Naive thymus-derived CD4-positive, alpha-beta T cell (primary cell): ENCODE measurements at regions of chr11 and their contacts with region 1.

Region 1: DNA sequence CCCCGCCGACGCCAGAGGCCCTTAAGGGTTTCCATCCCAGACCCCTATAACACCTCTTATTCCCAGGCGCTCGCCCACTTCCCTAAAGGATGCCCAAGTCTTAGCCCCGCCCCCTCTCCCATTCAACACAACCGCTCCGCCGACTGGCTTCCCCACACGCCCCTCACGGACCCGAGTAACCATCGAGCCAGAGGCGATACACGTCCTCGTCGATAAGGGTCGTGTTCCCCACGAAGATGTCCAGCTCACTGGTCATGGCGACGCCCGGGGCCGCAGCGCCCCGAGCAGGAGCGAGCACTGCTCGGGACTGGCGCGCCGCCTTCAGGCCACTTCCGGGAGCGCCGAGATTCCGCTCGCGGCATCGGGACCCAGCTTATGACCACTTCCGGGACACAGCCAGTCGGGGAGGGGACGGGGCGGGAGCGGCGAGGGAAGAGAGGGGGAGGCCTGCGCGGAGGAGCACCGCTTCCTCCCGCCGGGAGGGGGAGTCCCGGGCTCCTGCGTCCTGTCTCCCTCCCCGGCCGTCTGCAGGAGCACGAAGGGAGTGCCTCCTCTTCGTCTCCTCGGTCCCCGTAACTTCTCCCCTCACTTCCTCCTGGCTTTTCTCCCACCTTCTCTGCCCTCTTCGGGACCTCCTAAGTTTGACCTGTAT is at the start of gene FIBP:
- DNase-seq: peak; percentile 84 to 95 (median 90)
- ATAC-seq: peak; percentile 74
- H3K4me3 ChIP-seq: peak within 1 kb of the TSS; percentile 84
- H3K4me3 Mint-ChIP-seq: peak within 1 kb of the TSS; percentile 88 to 97 (median 93)
- H3K27ac ChIP-seq: peak within 1 kb of the TSS; percentile 92
- H3K27ac Mint-ChIP-seq: peak within 1 kb of the TSS; percentile 93 to 99 (median 97)
- H3K4me1 ChIP-seq: peaks cover 37 to 45% of the 10 kb centered on the region in 2 donors
- H3K4me1 Mint-ChIP-seq: peaks cover 50 to 69% (median 53%) of the 10 kb centered on the region in 7 donors
- H3K27me3 ChIP-seq: no peaks in the 10 kb centered on the region
- H3K27me3 Mint-ChIP-seq: no peaks in the 10 kb centered on the region
- total RNA-seq, gene FIBP: 25.9 to 72.1 (median 43.4) TPM

Region 2: DNA sequence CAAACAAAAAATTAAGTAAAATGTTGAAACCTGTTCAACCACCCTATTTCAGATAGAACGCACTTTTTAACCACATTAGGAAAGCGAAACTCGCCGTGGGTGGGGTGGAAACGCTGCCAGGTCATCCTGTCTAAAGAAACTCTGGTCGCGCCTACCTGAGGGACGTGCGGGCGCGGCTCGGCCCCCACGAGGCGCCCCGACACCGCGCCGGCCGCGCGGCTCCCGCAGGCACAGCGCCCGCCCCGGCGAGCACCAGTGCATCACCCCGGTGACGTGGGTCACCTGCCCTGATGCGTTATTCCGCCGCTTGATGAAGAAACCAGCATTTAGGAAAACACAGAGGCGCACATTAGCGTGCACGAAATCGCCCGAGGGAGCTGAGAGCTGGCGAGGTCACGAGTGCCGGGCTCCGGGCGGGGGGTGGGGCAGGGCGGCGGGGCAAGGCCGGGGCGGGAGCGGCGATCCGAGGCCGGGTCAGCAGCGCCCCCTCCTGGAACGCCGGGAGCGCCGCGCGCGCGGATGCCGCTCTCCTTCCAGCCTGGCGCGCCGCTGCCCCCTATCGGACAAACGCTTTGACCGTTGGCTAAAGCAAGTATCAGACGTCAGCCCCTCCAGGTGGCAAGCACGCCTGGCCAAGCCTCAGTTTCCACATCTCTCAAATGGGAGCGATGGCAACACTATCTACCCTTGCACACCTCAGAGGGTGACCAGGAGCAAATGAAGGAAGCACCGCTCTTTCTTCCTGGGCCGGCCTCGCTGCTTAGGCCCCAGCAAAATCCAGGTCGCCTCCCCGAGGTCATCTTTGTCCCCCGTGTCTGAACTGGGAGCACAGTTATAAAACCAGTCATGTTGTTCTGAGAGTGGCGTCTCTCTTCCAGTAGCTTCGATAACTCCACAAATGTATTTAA is 70.2 kb before region 1 on chr11:
- CTCF ChIA-PET with region 1: interaction called, 14 read pairs
- POLR2A ChIA-PET with region 1: interaction called, 4 read pairs
- intact Hi-C with region 1: loop called in 1 of 2 experiments (anchors 1 kb)
- DNase-seq: peak; percentile 79 to 98 (median 89)
- ATAC-seq: peak; percentile 98
- H3K4me3 ChIP-seq: peak overlapping the region; percentile 72
- H3K4me3 Mint-ChIP-seq: peak overlapping the region; percentile 74 to 90 (median 82)
- H3K27ac ChIP-seq: peak overlapping the region; percentile 75
- H3K27ac Mint-ChIP-seq: peak overlapping the region; percentile 56 to 90 (median 76)
- H3K4me1 ChIP-seq: peaks cover 7% of the 10 kb centered on the region in 2 donors
- H3K4me1 Mint-ChIP-seq: peaks cover 6 to 21% (median 17%) of the 10 kb centered on the region in 7 donors
- H3K27me3 ChIP-seq: no peaks in the 10 kb centered on the region
- H3K27me3 Mint-ChIP-seq: peaks cover 0 to 4% (median 0%) of the 10 kb centered on the region in 5 donors

Region 3: GRCh38 chr11:65873318-65874156 is 14.8 kb before region 1 on chr11:
- CTCF ChIA-PET with region 1: interaction called, 38 read pairs
- POLR2A ChIA-PET with region 1: interaction called, 316 read pairs
- intact Hi-C with region 1: loop called (anchors 1 to 2 kb)
- DNase-seq: peak; percentile 93 to 100 (median 97)
- ATAC-seq: peak; percentile 99
- H3K4me3 ChIP-seq: peak overlapping the region; percentile 75
- H3K4me3 Mint-ChIP-seq: peak overlapping the region; percentile 84 to 97 (median 91)
- H3K27ac ChIP-seq: peak overlapping the region; percentile 88
- H3K27ac Mint-ChIP-seq: peak overlapping the region; percentile 71 to 92 (median 91)
- H3K4me1 ChIP-seq: peaks cover 10 to 22% of the 10 kb centered on the region in 2 donors
- H3K4me1 Mint-ChIP-seq: peaks cover 7 to 37% (median 18%) of the 10 kb centered on the region in 7 donors
- H3K27me3 ChIP-seq: no peaks in the 10 kb centered on the region
- H3K27me3 Mint-ChIP-seq: peaks cover 0 to 3% (median 0%) of the 10 kb centered on the region in 5 donors

Region 4: DNA sequence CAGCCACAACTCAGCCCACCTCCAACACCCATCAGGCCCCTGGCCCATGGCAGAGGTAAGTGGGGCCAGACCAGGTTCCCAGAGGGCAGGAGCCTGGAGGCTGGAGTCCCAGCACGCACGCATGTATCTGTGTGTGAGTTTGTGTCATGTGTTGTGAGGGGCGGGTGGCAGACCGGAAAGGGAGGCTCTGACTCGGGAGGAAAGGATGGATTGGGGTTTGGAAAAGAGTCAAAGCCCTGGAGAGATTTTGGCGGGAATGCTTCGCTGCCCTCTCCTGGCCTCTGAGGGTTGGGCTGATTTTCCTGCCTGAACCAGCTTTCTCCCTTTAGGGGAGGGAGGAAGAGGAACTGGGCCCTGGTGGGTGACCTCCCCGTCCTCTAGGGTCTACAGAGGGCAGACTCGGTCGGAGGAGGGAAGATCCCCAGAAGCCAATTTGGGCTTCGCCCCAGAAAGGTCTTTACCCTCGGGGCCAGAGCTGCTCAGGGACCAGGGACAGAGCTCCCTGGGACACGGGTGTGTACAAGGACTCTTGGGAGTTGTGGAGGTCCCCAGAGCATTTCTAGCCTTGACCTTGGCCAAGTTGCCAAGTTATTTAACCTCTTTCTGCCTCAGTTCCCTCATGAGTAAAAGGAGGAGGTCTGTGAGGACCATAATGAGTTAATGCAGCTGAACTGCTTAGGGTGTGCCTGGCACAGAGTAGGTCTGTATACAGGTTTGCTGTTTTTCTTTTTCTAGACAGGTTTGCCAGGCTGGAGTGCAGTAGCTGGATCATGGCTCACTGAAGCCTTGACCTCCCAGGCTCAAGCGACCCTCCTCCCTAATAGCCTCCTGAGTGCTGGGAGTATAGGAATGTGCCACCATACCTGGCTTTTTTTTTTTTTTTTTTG is 23.6 kb after region 1 on chr11:
- CTCF ChIA-PET with region 1: interaction called, 13 read pairs
- POLR2A ChIA-PET with region 1: interaction called, 54 read pairs
- intact Hi-C with region 1: no loop called
- DNase-seq: no peak
- ATAC-seq: no peak
- H3K4me3 ChIP-seq: no peak overlapping the region
- H3K4me3 Mint-ChIP-seq: no peak overlapping the region
- H3K27ac ChIP-seq: no peak overlapping the region
- H3K27ac Mint-ChIP-seq: peak overlapping the region in 1 of 9 donors; percentile 5
- H3K4me1 ChIP-seq: peaks cover 2 to 5% of the 10 kb centered on the region in 2 donors
- H3K4me1 Mint-ChIP-seq: peaks cover 18 to 30% (median 21%) of the 10 kb centered on the region in 7 donors
- H3K27me3 ChIP-seq: no peaks in the 10 kb centered on the region
- H3K27me3 Mint-ChIP-seq: peaks cover 0 to 9% (median 0%) of the 10 kb centered on the region in 5 donors

Region 5: GRCh38 chr11:65961232-65961901 is 73.1 kb after region 1 on chr11 and contains the start of gene SART1:
- CTCF ChIA-PET with region 1: interaction called, 20 read pairs
- POLR2A ChIA-PET with region 1: interaction called, 108 read pairs
- intact Hi-C with region 1: loop called (anchors 1 kb)
- DNase-seq: peak; percentile 81 to 97 (median 94)
- ATAC-seq: peak; percentile 96
- H3K4me3 ChIP-seq: peak within 1 kb of the TSS; percentile 83
- H3K4me3 Mint-ChIP-seq: peak within 1 kb of the TSS; percentile 93 to 99 (median 98)
- H3K27ac ChIP-seq: peak within 1 kb of the TSS; percentile 96
- H3K27ac Mint-ChIP-seq: peak within 1 kb of the TSS; percentile 96 to 99 (median 98)
- H3K4me1 ChIP-seq: peaks cover 27 to 38% of the 10 kb centered on the region in 2 donors
- H3K4me1 Mint-ChIP-seq: peaks cover 23 to 64% (median 54%) of the 10 kb centered on the region in 7 donors
- H3K27me3 ChIP-seq: no peaks in the 10 kb centered on the region
- H3K27me3 Mint-ChIP-seq: no peaks in the 10 kb centered on the region
- total RNA-seq, gene SART1: 65.9 to 102 (median 90.8) TPM

Region 6: DNA sequence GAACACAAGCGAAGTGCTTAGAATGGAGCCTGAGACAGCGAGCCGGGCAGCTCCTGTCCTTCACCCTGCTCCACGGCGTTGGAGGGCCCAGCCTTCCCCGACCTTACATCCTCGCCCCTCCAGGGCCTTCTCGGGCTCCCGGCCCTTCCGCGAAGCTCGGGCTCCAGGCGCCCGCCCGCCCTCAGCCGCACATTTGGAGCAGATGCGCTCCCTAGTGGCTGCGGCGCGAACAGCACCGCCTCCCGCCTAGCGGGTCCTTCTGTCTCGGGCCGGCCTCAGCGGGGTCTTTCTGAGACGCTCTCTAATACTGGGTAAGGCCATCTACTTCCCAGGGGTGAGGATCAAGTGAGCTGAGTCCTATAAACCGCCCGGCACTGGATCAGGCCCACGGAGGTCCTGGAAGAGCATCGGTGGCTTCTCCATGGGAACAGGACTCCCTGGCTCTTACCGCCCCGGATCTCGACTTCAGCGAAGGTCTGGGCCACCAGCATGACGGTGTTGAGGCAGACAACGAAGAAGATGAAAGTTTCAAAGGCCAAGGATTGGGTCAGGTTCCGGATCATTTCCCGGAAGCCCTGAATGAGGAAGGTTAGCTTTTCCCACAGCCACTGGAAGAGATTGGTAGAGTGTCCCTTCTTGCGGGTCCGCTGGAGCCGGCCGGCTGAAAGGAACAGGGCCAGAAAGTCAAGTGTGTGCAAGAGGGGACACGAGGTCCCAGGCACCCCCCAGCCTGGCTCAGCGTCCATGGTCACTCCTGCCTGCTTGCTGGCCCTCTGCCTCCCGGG is 134.3 kb after region 1 on chr11:
- CTCF ChIA-PET with region 1: interaction called, 5 read pairs
- POLR2A ChIA-PET with region 1: no interaction called
- intact Hi-C with region 1: loop called in 1 of 2 experiments (anchors 1 kb)
- DNase-seq: peak; percentile 52 to 89 (median 69)
- ATAC-seq: peak; percentile 92
- H3K4me3 ChIP-seq: peak overlapping the region; percentile 39
- H3K4me3 Mint-ChIP-seq: peak overlapping the region in 9 of 10 donors; percentile 4 to 73 (median 45)
- H3K27ac ChIP-seq: no peak overlapping the region
- H3K27ac Mint-ChIP-seq: peak overlapping the region in 1 of 9 donors; percentile 59
- H3K4me1 ChIP-seq: peaks cover 0 to 5% of the 10 kb centered on the region in 2 donors
- H3K4me1 Mint-ChIP-seq: peaks cover 4 to 17% (median 5%) of the 10 kb centered on the region in 7 donors
- H3K27me3 ChIP-seq: no peaks in the 10 kb centered on the region
- H3K27me3 Mint-ChIP-seq: peaks cover 0 to 9% (median 4%) of the 10 kb centered on the region in 5 donors